Left lung (tissue), 14 donors: ENCODE measurements at regions of chr3 and their contacts with region 1.

Region 1: GRCh38 chr3:36434687-36435426 is 54.6 kb downstream of the STAC start:
- DNase-seq: no peak
- ATAC-seq: peak; percentile 71
- H3K4me3 ChIP-seq: no peak overlapping the region
- H3K27ac ChIP-seq: no peak overlapping the region
- H3K4me1 ChIP-seq: peaks cover 0 to 4% of the 10 kb centered on the region in 2 donors
- H3K27me3 ChIP-seq: no peaks in the 10 kb centered on the region
- CTCF ChIP-seq: no peak

Region 2: DNA sequence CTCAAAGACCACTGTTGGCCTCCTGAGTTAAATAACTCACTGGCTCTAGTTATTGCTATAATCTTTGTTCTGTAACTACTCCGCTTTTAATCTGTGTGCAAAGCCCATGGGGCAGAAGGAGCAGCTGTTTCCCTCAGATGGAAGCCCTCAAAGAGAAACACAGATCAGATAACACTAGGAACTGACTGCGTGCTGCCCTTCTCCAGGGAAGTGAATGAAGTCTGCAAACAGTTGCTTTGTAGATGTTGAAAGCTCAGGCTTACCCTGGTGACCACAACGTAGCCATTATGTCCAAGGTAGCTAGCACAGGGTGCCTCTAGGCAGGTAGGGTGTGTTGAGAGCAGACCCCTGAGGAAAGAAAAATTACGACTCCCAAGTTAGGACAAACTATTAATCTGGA is 206.9 kb before region 1 on chr3:
- intact Hi-C with region 1: loop called in 1 of 2 experiments (anchors 5 kb)
- DNase-seq: no peak
- ATAC-seq: no peak
- H3K4me3 ChIP-seq: no peak overlapping the region
- H3K27ac ChIP-seq: no peak overlapping the region
- H3K4me1 ChIP-seq: no peaks in the 10 kb centered on the region
- H3K27me3 ChIP-seq: no peaks in the 10 kb centered on the region
- CTCF ChIP-seq: no peak